ENCODE measurements at regions of chr18 and their contacts with region 1.

Region 1: DNA sequence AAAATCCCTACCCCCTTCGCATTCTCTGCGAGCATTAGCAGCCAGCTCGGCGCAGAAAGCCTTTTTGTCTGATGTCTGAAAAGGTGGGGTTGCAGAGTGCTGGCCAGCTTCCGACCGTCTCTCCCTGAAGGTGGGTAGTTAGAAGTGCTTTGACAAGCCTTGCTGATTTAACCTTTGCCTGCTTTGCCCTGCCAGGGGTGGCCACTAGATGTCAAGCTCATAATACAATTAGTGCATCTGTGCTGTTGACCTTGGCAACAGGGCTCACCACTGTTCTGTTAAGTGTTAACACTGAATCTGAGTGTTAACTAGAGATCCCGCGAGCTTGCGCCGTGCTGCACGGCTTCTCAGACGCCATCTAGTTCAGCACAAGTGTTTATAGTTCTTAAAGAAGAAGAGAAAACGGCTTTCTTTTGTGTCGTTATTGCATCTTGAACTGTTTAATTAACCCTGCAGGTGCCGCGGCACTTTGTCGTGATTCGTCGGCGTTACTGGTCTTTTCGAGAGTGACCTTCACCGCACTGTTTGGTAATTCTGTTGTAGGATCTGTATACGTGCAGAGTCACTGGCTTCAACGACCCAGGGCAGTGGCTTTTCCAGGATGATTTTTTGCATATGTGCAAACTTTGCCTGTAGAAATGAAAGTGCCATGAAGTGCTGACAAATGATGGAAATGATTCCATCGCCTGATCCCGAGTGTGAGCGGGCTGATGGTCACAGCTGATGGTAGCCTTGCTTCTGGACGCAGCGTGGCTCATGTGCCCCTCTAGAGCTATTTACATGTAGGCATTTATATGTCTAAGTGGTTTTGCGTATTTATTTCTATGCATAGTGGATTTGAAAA is 5.5 kb downstream of the SALL3 start:
- DNase-seq: peak; percentile 33
- ATAC-seq: peak; percentile 95
- H3K4me3 ChIP-seq: no peak overlapping the region
- H3K27ac ChIP-seq: no peak overlapping the region
- H3K4me1 ChIP-seq: no peaks in the 10 kb centered on the region
- H3K27me3 ChIP-seq: peaks cover 0 to 9% of the 10 kb centered on the region in 2 experiments
- CTCF ChIP-seq: peak; percentile 72
- EP300 ChIP-seq: no peak
- POLR2A ChIP-seq: no peak
- RAD21 ChIP-seq: no peak

Region 2: GRCh38 chr18:77765468-77765867 is 1219.7 kb before region 1 on chr18:
- CTCF ChIA-PET with region 1: no interaction called
- POLR2A ChIA-PET with region 1: no interaction called
- in situ Hi-C with region 1: loop called (anchors 10 kb)
- intact Hi-C with region 1: no loop called
- DNase-seq: peak; percentile 11
- ATAC-seq: peak; percentile 88
- H3K4me3 ChIP-seq: no peak overlapping the region
- H3K27ac ChIP-seq: no peak overlapping the region
- H3K4me1 ChIP-seq: no peaks in the 10 kb centered on the region
- H3K27me3 ChIP-seq: peaks cover 0 to 5% of the 10 kb centered on the region in 2 experiments; a peak in 1 of 5 replicates
- CTCF ChIP-seq: peak; percentile 71
- EP300 ChIP-seq: no peak
- POLR2A ChIP-seq: no peak
- RAD21 ChIP-seq: 0 out of 2 replicates have a peak, but pooled peaks have one; percentile 39

Region 3: DNA sequence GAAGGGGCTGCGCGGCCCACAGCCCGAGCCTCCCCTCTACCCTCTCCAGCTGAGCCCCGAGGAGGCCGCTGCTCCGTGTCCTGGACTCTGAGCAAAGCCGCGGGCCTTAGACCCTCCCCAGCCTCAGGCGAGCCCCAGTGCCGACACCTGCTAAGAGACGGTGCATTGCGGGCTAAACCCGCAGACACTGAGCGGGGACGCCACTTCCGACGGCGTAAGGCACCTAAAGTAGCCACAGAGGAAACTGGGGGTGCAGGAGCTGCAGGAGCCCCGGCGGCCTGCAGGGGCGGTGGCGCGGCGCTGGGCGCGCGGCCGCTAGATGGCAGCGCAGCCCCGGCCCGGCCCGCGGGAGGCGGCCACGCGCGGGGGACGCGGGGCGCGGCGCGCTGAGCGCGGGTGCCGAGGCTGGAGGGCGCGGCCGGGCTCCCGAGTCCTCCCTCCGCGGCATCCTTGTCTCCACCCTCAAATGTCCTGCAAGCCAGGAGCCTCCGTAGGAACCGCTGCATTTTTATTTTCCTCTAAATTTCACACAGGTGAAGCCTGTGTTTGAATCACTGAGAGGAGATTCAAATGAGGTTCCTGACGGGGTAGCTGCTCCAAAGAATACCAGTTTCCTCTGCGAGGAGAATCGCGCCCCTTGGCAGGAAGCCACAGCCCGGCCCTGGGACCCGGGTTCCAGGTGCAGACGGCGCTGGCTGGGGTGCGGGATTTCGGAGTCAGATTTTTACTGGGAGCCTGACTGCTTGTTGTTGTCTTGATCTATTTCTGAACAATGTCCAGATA is 1085.0 kb before region 1 on chr18:
- CTCF ChIA-PET with region 1: interaction called, 3 read pairs
- POLR2A ChIA-PET with region 1: no interaction called
- in situ Hi-C with region 1: loop called (anchors 25 kb)
- intact Hi-C with region 1: no loop called
- DNase-seq: no peak
- ATAC-seq: peak; percentile 100
- H3K4me3 ChIP-seq: peak overlapping the region in 1 of 3 experiments; percentile 28; a peak in 3 of 6 replicates
- H3K27ac ChIP-seq: no peak overlapping the region
- H3K4me1 ChIP-seq: no peaks in the 10 kb centered on the region
- H3K27me3 ChIP-seq: peaks cover 2 to 19% of the 10 kb centered on the region in 2 experiments; a peak in 3 of 5 replicates
- CTCF ChIP-seq: peak; percentile 64
- EP300 ChIP-seq: no peak
- POLR2A ChIP-seq: no peak
- RAD21 ChIP-seq: peak; percentile 43; the same call in 1 of the 2 replicates

Region 4: GRCh38 chr18:78659748-78660147 is 325.4 kb before region 1 on chr18:
- CTCF ChIA-PET with region 1: interaction called, 3 read pairs
- POLR2A ChIA-PET with region 1: no interaction called
- in situ Hi-C with region 1: loop called (anchors 25 kb)
- intact Hi-C with region 1: loop called (anchors 2 kb)
- DNase-seq: no peak
- ATAC-seq: peak; percentile 82
- H3K4me3 ChIP-seq: no peak overlapping the region
- H3K27ac ChIP-seq: no peak overlapping the region
- H3K4me1 ChIP-seq: no peaks in the 10 kb centered on the region
- H3K27me3 ChIP-seq: peaks cover 0 to 9% of the 10 kb centered on the region in 2 experiments; a peak in 2 of 5 replicates
- CTCF ChIP-seq: peak; percentile 78
- EP300 ChIP-seq: no peak
- POLR2A ChIP-seq: no peak
- RAD21 ChIP-seq: no peak

Region 5: GRCh38 chr18:78914249-78914935 is 70.8 kb before region 1 on chr18:
- CTCF ChIA-PET with region 1: no interaction called
- POLR2A ChIA-PET with region 1: no interaction called
- in situ Hi-C with region 1: no loop called
- intact Hi-C with region 1: no loop called
- DNase-seq: no peak
- ATAC-seq: no peak
- H3K4me3 ChIP-seq: no peak overlapping the region
- H3K27ac ChIP-seq: no peak overlapping the region
- H3K4me1 ChIP-seq: no peaks in the 10 kb centered on the region
- H3K27me3 ChIP-seq: peaks cover 0 to 27% of the 10 kb centered on the region in 2 experiments; a peak in 4 of 5 replicates
- CTCF ChIP-seq: no peak
- EP300 ChIP-seq: no peak
- POLR2A ChIP-seq: no peak
- RAD21 ChIP-seq: no peak